ENCODE measurements at regions of chr10 and their contacts with region 1.

Region 1: DNA sequence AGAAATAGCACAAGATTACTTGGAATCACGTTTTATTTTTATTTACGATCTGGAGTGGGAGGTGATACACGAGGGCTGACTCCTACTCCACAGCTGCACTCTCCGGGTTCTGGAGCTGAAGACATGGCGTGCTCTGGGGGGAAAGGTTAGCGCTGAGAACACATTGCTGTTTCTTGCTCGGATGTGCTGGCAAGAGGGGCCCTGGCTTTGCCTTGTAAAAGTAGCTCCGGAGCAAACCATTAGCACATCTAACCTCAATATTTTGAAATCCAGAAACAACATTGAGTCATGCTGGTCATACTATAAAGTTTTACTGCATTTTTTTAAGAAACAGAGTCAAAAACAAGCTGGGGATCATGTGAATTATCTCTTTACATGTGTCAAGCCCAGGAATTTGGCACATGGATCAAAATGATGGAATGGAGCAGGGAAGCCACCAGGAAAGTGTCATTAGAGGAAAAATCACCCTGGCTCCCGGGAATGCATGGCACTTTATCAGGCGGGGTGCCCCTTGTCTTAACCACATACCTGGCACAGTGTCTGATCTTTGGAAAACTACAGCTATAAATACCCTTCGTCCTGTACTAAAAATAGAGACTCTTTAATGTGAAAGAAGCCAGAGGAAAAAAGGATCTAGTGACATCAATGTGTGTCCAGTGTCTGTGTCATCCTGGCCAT is 31.6 kb upstream of the LYZL1 start:
- DNase-seq: peak; percentile 73
- H3K4me3 ChIP-seq: no peak overlapping the region
- H3K4me3 Mint-ChIP-seq: peak overlapping the region; percentile 55
- H3K27ac Mint-ChIP-seq: peak overlapping the region; percentile 90
- H3K4me1 ChIP-seq: peaks cover 65% of the 10 kb centered on the region
- H3K4me1 Mint-ChIP-seq: peaks cover 57% of the 10 kb centered on the region
- H3K27me3 ChIP-seq: no peaks in the 10 kb centered on the region
- H3K27me3 Mint-ChIP-seq: no peaks in the 10 kb centered on the region
- CTCF ChIP-seq: no peak

Region 2: DNA sequence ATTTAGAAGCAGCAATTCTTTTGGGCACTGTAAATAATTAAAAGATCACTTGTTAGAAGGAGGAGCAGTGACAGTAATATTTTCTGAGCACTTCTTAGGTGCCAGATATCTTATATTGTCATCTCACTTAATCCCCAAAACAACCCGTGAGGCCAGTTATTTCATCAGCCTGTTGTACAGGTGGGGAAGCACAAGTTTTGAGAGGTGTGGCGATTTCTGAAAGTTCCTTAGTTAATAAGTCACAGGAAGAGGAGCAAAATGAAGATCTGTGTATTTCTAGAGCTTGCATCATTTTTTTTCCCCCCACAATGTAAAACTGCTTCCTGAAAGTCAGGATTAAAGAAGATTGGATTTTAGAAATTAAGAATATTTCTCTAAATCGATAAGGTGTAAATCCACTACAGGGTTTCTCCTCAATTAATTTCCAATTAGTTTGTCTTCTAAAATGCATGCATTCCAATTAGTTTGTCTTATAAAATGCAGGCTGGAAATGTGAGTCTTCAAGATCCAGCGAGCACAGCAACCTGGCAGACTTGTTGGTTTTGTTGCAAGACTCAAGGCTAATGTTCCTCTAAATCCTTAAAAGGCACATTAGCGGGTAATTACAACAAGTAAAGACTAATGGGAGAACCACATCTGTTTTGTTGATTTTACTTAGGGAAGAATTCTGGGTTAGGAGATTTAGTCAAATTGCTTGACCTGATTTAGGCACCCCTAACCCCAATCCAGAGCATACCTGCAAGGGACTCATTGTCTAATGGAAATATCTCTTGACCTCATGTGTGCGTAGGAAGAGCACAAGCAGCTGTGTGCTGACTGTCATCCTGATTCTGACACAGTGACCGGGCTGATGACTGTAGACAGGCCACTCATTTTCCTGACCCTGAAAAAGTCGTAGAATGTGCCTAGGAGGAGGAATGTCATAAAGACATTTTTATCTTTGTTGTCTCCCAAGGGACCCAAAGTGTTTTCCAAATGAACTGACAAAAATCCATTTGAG is 307.9 kb before region 1 on chr10:
- CTCF ChIA-PET with region 1: no interaction called
- POLR2A ChIA-PET with region 1: no interaction called
- intact Hi-C with region 1: loop called (anchors 2 kb)
- DNase-seq: peak; percentile 71 to 90
- H3K4me3 ChIP-seq: no peak overlapping the region
- H3K4me3 Mint-ChIP-seq: peak overlapping the region; percentile 65
- H3K27ac Mint-ChIP-seq: peak overlapping the region; percentile 99
- H3K4me1 ChIP-seq: peaks cover 24% of the 10 kb centered on the region
- H3K4me1 Mint-ChIP-seq: peaks cover 68% of the 10 kb centered on the region
- H3K27me3 ChIP-seq: no peaks in the 10 kb centered on the region
- H3K27me3 Mint-ChIP-seq: no peaks in the 10 kb centered on the region
- CTCF ChIP-seq: no peak

Region 3: DNA sequence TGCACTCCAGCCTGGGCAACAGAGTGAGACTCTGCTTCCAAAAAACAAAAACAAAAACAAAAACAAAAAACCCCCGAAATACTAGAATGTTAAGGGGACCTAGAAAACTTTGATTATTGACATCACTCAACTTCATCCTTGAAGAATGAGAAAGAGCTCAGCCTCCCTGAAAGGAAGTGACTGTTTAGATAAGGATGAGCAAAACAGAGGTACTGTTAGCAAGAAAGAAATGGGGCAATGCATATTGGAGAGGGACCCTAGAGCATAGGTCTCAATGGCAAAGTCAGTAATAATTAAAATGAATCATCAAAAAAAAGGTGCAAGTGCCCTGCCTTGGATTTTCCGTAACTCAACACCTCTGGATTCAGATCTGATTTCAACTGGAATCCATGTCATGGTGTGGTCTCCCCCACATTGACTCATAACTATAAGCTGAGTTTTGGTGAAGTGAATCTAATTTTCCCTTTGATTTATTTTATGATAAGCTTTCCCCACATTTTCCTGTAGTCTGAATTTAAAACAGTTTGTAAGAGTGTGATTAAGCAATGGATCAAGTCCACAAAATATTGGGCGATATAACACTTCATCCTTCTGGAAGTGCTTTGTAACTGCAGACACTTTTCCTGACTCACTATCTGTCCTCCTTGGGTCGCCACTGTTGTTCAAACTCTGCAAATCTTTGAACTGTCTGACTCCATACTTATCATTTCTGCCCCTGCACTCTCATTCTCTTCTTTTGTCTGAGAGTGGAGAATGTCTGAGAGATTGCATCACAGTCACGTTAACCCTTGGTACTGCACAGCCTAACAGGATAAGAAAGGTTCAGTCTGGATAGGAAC is 193.2 kb before region 1 on chr10:
- CTCF ChIA-PET with region 1: no interaction called
- POLR2A ChIA-PET with region 1: no interaction called
- intact Hi-C with region 1: loop called (anchors 2 kb)
- DNase-seq: peak; percentile 87 to 89
- H3K4me3 ChIP-seq: 0 out of 2 replicates have a peak overlapping the region, but pooled peaks have one; percentile 14
- H3K4me3 Mint-ChIP-seq: peak overlapping the region; percentile 32
- H3K27ac Mint-ChIP-seq: peak overlapping the region; percentile 68
- H3K4me1 ChIP-seq: peaks cover 60% of the 10 kb centered on the region
- H3K4me1 Mint-ChIP-seq: peaks cover 41% of the 10 kb centered on the region
- H3K27me3 ChIP-seq: no peaks in the 10 kb centered on the region
- H3K27me3 Mint-ChIP-seq: no peaks in the 10 kb centered on the region
- CTCF ChIP-seq: peak; percentile 19 to 47

Region 4: GRCh38 chr10:29141063-29141462 is 116.2 kb before region 1 on chr10:
- CTCF ChIA-PET with region 1: no interaction called
- POLR2A ChIA-PET with region 1: no interaction called
- intact Hi-C with region 1: loop called (anchors 2 kb)
- DNase-seq: no peak
- H3K4me3 ChIP-seq: no peak overlapping the region
- H3K4me3 Mint-ChIP-seq: peak overlapping the region; percentile 6
- H3K27ac Mint-ChIP-seq: peak overlapping the region; percentile 90
- H3K4me1 ChIP-seq: peaks cover 32% of the 10 kb centered on the region
- H3K4me1 Mint-ChIP-seq: peaks cover 37% of the 10 kb centered on the region
- H3K27me3 ChIP-seq: no peaks in the 10 kb centered on the region
- H3K27me3 Mint-ChIP-seq: no peaks in the 10 kb centered on the region
- CTCF ChIP-seq: no peak

Region 5: DNA sequence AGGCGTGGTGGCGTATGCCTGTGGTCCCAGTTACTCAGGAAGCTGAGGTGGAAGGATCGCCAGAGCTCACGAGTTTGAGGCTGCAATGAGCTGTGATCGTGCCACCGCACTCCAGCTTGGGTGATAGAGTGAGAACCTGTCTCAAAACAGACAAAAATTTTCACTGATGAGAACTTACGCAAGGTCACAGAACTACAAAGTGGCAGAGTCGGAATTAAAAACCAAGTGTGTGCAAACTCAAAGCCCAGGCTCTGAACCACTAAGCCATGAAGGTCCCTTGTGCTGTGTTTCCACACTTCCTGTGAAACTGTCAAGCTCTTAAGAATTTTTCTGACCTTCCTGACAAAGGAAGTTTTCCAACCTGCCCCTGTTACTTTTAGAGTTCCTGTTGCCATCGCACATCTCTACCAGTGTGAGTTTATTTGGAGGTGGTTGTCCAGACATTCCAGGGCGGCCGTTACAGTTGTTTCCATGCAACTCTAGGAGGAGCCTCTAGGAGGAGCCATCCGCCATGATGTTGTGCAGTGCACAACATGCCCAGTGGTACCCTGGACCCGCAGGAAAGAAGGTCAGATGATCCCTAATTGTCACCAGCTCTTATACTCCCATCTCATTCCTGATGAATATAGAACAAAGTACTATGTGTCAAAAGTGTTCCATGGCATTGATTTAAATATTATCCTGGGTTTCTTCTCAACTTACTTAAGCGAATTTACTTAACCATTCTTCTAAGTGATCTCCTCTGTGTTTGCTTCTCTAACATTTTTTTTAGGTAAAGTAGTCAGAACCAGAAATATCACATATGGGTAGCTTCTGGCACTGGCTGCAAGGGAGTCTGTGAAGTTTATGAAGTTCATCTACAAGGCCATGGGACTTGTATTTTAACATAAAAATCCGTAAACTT is 17.4 kb before region 1 on chr10:
- CTCF ChIA-PET with region 1: interaction called, 9 read pairs
- POLR2A ChIA-PET with region 1: interaction called, 5 read pairs
- intact Hi-C with region 1: loop called (anchors 1 kb)
- DNase-seq: peak; percentile 74 to 78
- H3K4me3 ChIP-seq: no peak overlapping the region
- H3K4me3 Mint-ChIP-seq: no peak overlapping the region
- H3K27ac Mint-ChIP-seq: peak overlapping the region; percentile 55
- H3K4me1 ChIP-seq: peaks cover 45% of the 10 kb centered on the region
- H3K4me1 Mint-ChIP-seq: peaks cover 28% of the 10 kb centered on the region
- H3K27me3 ChIP-seq: no peaks in the 10 kb centered on the region
- H3K27me3 Mint-ChIP-seq: no peaks in the 10 kb centered on the region
- CTCF ChIP-seq: peak; percentile 79 to 87

Region 6: GRCh38 chr10:29276251-29277224 is 19.3 kb after region 1 on chr10:
- CTCF ChIA-PET with region 1: interaction called, 5 read pairs
- POLR2A ChIA-PET with region 1: no interaction called
- intact Hi-C with region 1: loop called (anchors 2 kb)
- DNase-seq: no peak
- H3K4me3 ChIP-seq: no peak overlapping the region
- H3K4me3 Mint-ChIP-seq: no peak overlapping the region
- H3K27ac Mint-ChIP-seq: no peak overlapping the region
- H3K4me1 ChIP-seq: peaks cover 23% of the 10 kb centered on the region
- H3K4me1 Mint-ChIP-seq: peaks cover 25% of the 10 kb centered on the region
- H3K27me3 ChIP-seq: no peaks in the 10 kb centered on the region
- H3K27me3 Mint-ChIP-seq: no peaks in the 10 kb centered on the region
- CTCF ChIP-seq: no peak

Region 7: GRCh38 chr10:29304264-29305030 is 47.2 kb after region 1 on chr10:
- CTCF ChIA-PET with region 1: interaction called, 6 read pairs
- POLR2A ChIA-PET with region 1: no interaction called
- intact Hi-C with region 1: loop called (anchors 1 kb)
- DNase-seq: peak; percentile 74 to 86
- H3K4me3 ChIP-seq: no peak overlapping the region
- H3K4me3 Mint-ChIP-seq: peak overlapping the region; percentile 55
- H3K27ac Mint-ChIP-seq: peak overlapping the region; percentile 48
- H3K4me1 ChIP-seq: peaks cover 14% of the 10 kb centered on the region; the same call in 1 of the 2 replicates
- H3K4me1 Mint-ChIP-seq: no peaks in the 10 kb centered on the region
- H3K27me3 ChIP-seq: no peaks in the 10 kb centered on the region
- H3K27me3 Mint-ChIP-seq: no peaks in the 10 kb centered on the region
- CTCF ChIP-seq: peak; percentile 95 to 99

Measured in Caco-2 (cell line).